ENCODE measurements at regions of chr10 and their contacts with region 1.

Region 1: DNA sequence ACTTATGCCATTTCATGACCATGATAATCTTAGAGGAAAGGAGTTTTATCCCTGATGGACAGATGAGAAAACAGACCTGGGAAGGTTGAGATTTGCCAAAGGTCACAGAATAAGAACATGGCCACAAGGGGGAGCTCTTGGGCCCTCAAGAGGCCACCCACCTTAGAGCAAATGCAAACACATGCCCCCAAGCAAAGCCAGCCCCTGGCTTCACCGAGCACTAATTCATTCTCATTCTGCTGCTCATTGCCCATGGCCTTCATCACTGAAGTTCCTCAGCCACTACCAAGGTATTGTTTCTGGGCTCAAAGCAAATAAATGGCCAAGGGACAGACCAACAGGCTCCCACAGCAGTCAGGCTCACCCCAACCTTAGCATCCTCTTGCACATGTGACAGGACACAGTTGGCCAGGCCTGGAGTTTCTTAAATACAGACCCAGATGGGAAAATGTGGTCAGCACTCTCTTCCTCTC is 44.2 kb downstream of the PDLIM1 start:
- DNase-seq: peak in 1 of 2 donors; percentile 89
- H3K4me3 ChIP-seq: no peak overlapping the region
- H3K27ac ChIP-seq: peak overlapping the region; percentile 70 to 82
- H3K4me1 ChIP-seq: peaks cover 8 to 46% of the 10 kb centered on the region in 2 donors
- H3K27me3 ChIP-seq: no peaks in the 10 kb centered on the region
- CTCF ChIP-seq: peak; percentile 62 to 73 (median 67)

Region 2: DNA sequence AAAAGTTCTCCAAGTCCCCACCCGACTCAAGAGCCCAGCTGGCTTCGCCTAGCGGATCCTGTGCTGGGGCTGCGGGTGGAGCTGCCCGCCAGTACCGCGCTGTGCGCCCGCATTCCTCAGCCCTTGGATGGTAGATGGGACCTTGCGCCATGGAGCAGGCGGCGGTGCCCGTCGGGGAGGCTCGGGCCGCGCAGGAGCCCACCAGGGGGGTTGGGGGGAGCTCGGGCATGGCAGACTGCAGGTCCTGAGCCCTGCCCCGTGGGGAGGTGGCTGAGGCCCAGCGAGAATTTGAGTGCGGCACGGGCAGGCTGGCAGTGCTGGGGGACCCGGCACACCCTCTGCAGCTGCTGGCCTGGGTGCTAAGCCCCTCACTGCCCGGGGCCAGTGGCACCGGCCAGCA is 787.2 kb before region 1 on chr10:
- intact Hi-C with region 1: no loop called
- DNase-seq: no peak
- H3K4me3 ChIP-seq: no peak overlapping the region
- H3K27ac ChIP-seq: no peak overlapping the region
- H3K4me1 ChIP-seq: no peaks in the 10 kb centered on the region
- H3K27me3 ChIP-seq: no peaks in the 10 kb centered on the region
- CTCF ChIP-seq: no peak

Region 3: GRCh38 chr10:95133016-95133752 is 113.4 kb before region 1 on chr10:
- intact Hi-C with region 1: loop called (anchors 10 kb)
- DNase-seq: peak in 1 of 2 donors; percentile 83
- H3K4me3 ChIP-seq: no peak overlapping the region
- H3K27ac ChIP-seq: no peak overlapping the region
- H3K4me1 ChIP-seq: no peaks in the 10 kb centered on the region
- H3K27me3 ChIP-seq: no peaks in the 10 kb centered on the region
- CTCF ChIP-seq: peak; percentile 49 to 65 (median 64)

Region 4: GRCh38 chr10:95208702-95209391 is 37.8 kb before region 1 on chr10:
- intact Hi-C with region 1: loop called (anchors 2 kb)
- DNase-seq: no peak
- H3K4me3 ChIP-seq: no peak overlapping the region
- H3K27ac ChIP-seq: no peak overlapping the region
- H3K4me1 ChIP-seq: no peaks in the 10 kb centered on the region
- H3K27me3 ChIP-seq: no peaks in the 10 kb centered on the region
- CTCF ChIP-seq: peak in 1 of 3 experiments; percentile 44

Region 5: DNA sequence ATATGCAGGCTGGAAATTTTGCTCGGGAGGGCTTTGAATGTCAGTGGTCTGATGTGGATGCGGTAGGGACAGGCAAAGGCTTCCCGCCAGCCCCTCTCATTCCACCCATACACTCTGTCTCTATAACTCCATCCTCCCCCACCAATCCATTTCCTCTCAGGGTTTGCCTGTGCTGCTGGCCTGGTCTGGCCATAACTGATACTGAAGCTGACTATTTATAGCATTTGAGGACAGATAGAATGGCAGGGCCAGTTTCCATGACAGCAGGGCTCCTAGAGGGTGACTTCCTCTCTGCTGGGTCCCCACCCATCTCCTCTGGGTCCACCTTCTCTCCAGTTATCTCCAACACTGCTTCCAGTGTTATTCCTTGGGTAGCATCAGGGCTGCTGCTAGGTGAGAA is 50.8 kb after region 1 on chr10:
- intact Hi-C with region 1: no loop called
- DNase-seq: no peak
- H3K4me3 ChIP-seq: no peak overlapping the region
- H3K27ac ChIP-seq: no peak overlapping the region
- H3K4me1 ChIP-seq: peaks cover 0 to 3% of the 10 kb centered on the region in 2 donors
- H3K27me3 ChIP-seq: no peaks in the 10 kb centered on the region
- CTCF ChIP-seq: no peak

Region 6: GRCh38 chr10:95308389-95309302 is 62.0 kb after region 1 on chr10:
- intact Hi-C with region 1: loop called (anchors 5 kb)
- DNase-seq: peak in 1 of 2 donors; percentile 97
- H3K4me3 ChIP-seq: no peak overlapping the region
- H3K27ac ChIP-seq: peak overlapping the region; percentile 68 to 80
- H3K4me1 ChIP-seq: peaks cover 16 to 46% of the 10 kb centered on the region in 2 donors
- H3K27me3 ChIP-seq: no peaks in the 10 kb centered on the region
- CTCF ChIP-seq: no peak

Region 7: DNA sequence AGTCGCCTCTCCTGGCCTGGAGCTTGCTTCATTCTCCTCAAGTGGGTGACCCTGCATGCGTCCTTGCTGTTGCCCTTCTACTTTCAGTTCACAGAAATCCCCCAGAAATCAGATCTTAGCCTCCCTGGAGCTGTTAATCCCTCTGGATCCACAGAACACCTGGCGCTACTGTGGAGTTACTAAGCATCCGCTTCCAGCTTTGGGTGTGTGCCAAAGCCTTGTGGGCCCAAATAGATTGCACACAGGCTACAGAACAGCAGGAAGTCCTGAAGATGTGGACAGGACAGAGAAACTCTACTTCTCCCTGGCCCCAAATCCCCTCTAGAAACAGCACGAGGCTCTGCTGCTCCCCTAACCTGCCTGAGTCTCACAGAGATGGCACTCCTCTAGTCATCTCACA is 80.8 kb after region 1 on chr10:
- intact Hi-C with region 1: no loop called
- DNase-seq: no peak
- H3K4me3 ChIP-seq: no peak overlapping the region
- H3K27ac ChIP-seq: peak overlapping the region; percentile 31 to 96
- H3K4me1 ChIP-seq: peaks cover 8 to 22% of the 10 kb centered on the region in 2 donors
- H3K27me3 ChIP-seq: no peaks in the 10 kb centered on the region
- CTCF ChIP-seq: no peak

Region 8: GRCh38 chr10:95363303-95363912 is 116.8 kb after region 1 on chr10:
- intact Hi-C with region 1: loop called (anchors 5 kb)
- DNase-seq: no peak
- H3K4me3 ChIP-seq: no peak overlapping the region
- H3K27ac ChIP-seq: peak overlapping the region; percentile 4 to 31
- H3K4me1 ChIP-seq: peaks cover 2 to 36% of the 10 kb centered on the region in 2 donors
- H3K27me3 ChIP-seq: no peaks in the 10 kb centered on the region
- CTCF ChIP-seq: peak; percentile 80 to 84 (median 83)

Measured in ascending aorta (tissue), 2 donors.